Cardiac septum (tissue), 1 donor: ENCODE measurements at regions of chr19 and their contacts with region 1.

Region 1: DNA sequence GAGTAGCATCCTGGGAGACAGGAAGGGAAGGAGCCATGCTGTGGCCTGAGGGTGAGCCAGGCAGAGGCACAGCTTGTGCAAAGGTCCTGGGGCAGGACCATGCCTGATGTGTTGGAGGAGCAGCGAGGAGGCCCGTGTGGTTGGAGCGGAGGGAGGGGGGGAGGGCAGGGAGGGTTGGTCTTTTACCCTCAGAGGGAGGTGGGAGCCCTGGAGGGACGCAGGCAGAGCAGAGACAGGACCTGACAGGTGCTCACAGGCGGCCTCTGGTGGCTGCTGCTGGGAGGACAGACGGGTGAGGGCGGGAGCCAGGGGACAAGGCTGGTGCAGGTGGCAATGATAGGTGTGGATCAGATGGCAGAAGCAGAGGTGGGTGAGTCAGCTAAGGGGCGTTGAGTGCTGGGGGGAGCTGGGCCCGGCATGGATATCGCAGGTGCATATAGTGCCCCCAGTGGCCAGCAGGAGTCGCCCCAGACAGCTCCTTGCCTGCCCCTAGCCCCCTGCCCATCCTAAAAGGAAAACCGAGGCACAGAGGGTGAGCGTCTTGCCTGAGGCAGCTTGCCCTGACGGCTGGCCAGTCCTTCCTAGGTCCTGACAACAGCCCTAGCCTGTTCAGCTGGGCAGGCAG is 9.8 kb upstream of the GNA15 start:
- DNase-seq: peak; percentile 86

Region 2: GRCh38 chr19:3075895-3076431 is 50.0 kb before region 1 on chr19:
- intact Hi-C with region 1: loop called (anchors 10 kb)
- DNase-seq: peak; percentile 87

Region 3: GRCh38 chr19:3108775-3109174 is 17.2 kb before region 1 on chr19:
- intact Hi-C with region 1: no loop called
- DNase-seq: no peak

Region 4: GRCh38 chr19:3606690-3607289 is 480.8 kb after region 1 on chr19 and contains the start of gene TBXA2R:
- intact Hi-C with region 1: no loop called
- DNase-seq: peak; percentile 88
- total RNA-seq, gene TBXA2R: 1.9 TPM